Vagina (tissue), 2 donors: ENCODE measurements at regions of chr4 and their contacts with region 1.

Region 1: DNA sequence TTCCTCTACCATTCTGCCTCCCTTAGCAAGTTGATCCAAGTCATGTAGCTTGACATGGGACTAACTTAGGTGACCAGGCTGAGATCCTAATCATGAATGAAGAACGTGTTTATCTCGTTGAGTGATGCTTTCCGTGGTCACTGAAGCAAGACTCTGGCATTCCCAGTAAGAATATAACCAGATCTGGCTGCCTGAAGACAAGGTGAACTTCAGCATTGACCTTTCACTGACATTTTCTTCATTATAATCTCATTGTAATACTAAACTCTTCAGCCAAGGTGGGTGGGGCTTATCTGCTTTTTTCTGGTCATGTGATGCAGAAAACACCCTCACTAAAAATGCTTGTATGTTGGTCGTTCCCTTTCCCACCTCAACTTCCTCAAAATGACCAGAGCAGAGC is 1588.1 kb upstream of the PABPC4L start:
- DNase-seq: no peak
- H3K4me3 ChIP-seq: no peak overlapping the region
- H3K27ac ChIP-seq: no peak overlapping the region
- H3K4me1 ChIP-seq: no peaks in the 10 kb centered on the region
- H3K27me3 ChIP-seq: no peaks in the 10 kb centered on the region
- CTCF ChIP-seq: no peak
- POLR2A ChIP-seq: no peak

Region 2: DNA sequence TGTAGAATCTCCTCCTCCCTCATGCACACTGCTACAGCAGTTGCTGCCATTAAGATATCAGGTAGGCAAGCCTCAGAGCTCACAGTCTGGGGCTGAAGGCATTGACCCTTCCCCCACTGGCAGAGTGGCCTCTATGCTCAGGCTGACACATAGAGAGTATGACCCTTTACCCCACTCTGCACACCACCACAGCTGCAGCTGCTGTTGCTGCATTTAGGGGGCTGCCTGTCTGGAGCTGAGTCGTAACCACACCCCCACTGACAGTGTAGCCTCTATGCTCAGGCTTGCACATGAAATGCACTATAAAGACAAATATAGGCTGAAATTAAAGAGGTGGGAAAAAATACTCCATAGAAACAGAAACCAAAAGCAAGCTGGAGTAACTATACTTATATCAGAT is 1298.8 kb before region 1 on chr4:
- intact Hi-C with region 1: loop called (anchors 5 kb)
- DNase-seq: no peak
- H3K4me3 ChIP-seq: no peak overlapping the region
- H3K27ac ChIP-seq: no peak overlapping the region
- H3K4me1 ChIP-seq: no peaks in the 10 kb centered on the region
- H3K27me3 ChIP-seq: no peaks in the 10 kb centered on the region
- CTCF ChIP-seq: no peak
- POLR2A ChIP-seq: no peak

Region 3: DNA sequence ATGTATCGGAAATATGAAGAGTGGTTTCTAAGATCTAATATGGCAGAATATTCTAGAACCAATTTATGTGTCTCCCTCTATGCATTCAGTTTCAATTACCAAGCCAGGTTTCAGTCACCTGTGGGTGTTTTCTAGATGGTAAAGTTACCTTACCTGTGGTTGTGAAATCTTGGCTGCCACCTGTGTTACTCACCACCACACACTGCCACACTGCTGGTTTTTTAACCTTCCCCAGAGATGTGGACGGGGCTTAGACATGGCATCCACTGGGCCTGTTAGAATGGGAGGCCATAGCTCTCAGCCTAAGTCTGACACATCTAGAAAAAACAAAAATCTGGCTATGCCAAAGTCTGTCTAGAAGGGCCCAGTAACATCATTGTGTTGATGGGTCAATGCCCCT is 691.6 kb before region 1 on chr4:
- intact Hi-C with region 1: no loop called
- DNase-seq: no peak
- H3K4me3 ChIP-seq: no peak overlapping the region
- H3K27ac ChIP-seq: no peak overlapping the region
- H3K4me1 ChIP-seq: no peaks in the 10 kb centered on the region
- H3K27me3 ChIP-seq: no peaks in the 10 kb centered on the region
- CTCF ChIP-seq: no peak
- POLR2A ChIP-seq: no peak